ENCODE measurements at regions of chr11 and their contacts with region 1.

Region 1: GRCh38 chr11:128695539-128696221 is 1.8 kb downstream of the FLI1 start:
- DNase-seq: peak in 7 of 9 donors; percentile 39 to 63 (median 52)
- ATAC-seq: peak; percentile 75
- H3K4me3 ChIP-seq: peak overlapping the region; percentile 82
- H3K4me3 Mint-ChIP-seq: peak overlapping the region; percentile 89 to 99 (median 96)
- H3K27ac ChIP-seq: peak overlapping the region; percentile 86
- H3K27ac Mint-ChIP-seq: peak overlapping the region; percentile 72 to 96 (median 94)
- H3K4me1 ChIP-seq: peaks cover 45 to 53% of the 10 kb centered on the region in 2 donors
- H3K4me1 Mint-ChIP-seq: peaks cover 53 to 75% (median 67%) of the 10 kb centered on the region in 7 donors
- H3K27me3 ChIP-seq: no peaks in the 10 kb centered on the region
- H3K27me3 Mint-ChIP-seq: peaks cover 0 to 22% (median 0%) of the 10 kb centered on the region in 5 donors

Region 2: GRCh38 chr11:127726367-127726766 is 969.3 kb before region 1 on chr11:
- CTCF ChIA-PET with region 1: no interaction called
- POLR2A ChIA-PET with region 1: no interaction called
- intact Hi-C with region 1: no loop called
- DNase-seq: no peak
- ATAC-seq: no peak
- H3K4me3 ChIP-seq: no peak overlapping the region
- H3K4me3 Mint-ChIP-seq: no peak overlapping the region
- H3K27ac ChIP-seq: no peak overlapping the region
- H3K27ac Mint-ChIP-seq: no peak overlapping the region
- H3K4me1 ChIP-seq: no peaks in the 10 kb centered on the region
- H3K4me1 Mint-ChIP-seq: no peaks in the 10 kb centered on the region
- H3K27me3 ChIP-seq: no peaks in the 10 kb centered on the region
- H3K27me3 Mint-ChIP-seq: no peaks in the 10 kb centered on the region

Region 3: GRCh38 chr11:128512474-128512996 is 183.1 kb before region 1 on chr11:
- CTCF ChIA-PET with region 1: no interaction called
- POLR2A ChIA-PET with region 1: interaction called, 3 read pairs
- intact Hi-C with region 1: loop called (anchors 2 to 5 kb)
- DNase-seq: peak in 5 of 9 donors; percentile 26 to 56 (median 47)
- ATAC-seq: peak; percentile 40
- H3K4me3 ChIP-seq: peak overlapping the region; percentile 96
- H3K4me3 Mint-ChIP-seq: peak overlapping the region; percentile 94 to 100 (median 98)
- H3K27ac ChIP-seq: peak overlapping the region; percentile 97
- H3K27ac Mint-ChIP-seq: peak overlapping the region; percentile 92 to 99 (median 97)
- H3K4me1 ChIP-seq: peaks cover 54 to 59% of the 10 kb centered on the region in 2 donors
- H3K4me1 Mint-ChIP-seq: peaks cover 50 to 94% (median 77%) of the 10 kb centered on the region in 7 donors
- H3K27me3 ChIP-seq: no peaks in the 10 kb centered on the region
- H3K27me3 Mint-ChIP-seq: no peaks in the 10 kb centered on the region

Region 4: DNA sequence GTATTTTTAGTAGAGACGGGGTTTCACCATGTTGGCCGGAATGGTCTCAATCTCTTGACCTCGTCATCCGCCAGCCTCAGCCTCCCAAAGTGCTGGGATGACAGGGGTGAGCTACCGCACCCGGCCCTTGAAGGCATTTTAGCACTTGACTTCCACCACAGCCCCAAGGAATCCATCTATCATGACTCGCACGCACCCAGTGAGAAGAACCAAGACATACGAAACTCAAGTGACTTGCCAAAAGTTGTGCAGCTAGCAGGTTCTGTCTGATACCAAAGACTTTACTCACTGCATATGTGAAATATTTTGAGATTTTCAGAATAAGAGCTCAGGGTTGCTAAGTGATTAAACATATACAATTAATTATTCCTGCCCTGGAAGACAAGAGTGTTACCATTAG is 19.2 kb after region 1 on chr11:
- CTCF ChIA-PET with region 1: interaction called, 7 read pairs
- POLR2A ChIA-PET with region 1: interaction called, 22 read pairs
- intact Hi-C with region 1: loop called (anchors 1 kb)
- DNase-seq: no peak
- ATAC-seq: no peak
- H3K4me3 ChIP-seq: no peak overlapping the region
- H3K4me3 Mint-ChIP-seq: peak overlapping the region in 9 of 10 donors; percentile 2 to 92 (median 42)
- H3K27ac ChIP-seq: peak overlapping the region; percentile 73
- H3K27ac Mint-ChIP-seq: peak overlapping the region; percentile 61 to 99 (median 93)
- H3K4me1 ChIP-seq: peaks cover 77 to 90% of the 10 kb centered on the region in 2 donors
- H3K4me1 Mint-ChIP-seq: peaks cover 87 to 100% (median 98%) of the 10 kb centered on the region in 7 donors
- H3K27me3 ChIP-seq: no peaks in the 10 kb centered on the region
- H3K27me3 Mint-ChIP-seq: no peaks in the 10 kb centered on the region

Region 5: GRCh38 chr11:128725630-128726319 is 30.1 kb after region 1 on chr11:
- CTCF ChIA-PET with region 1: interaction called, 3 read pairs
- POLR2A ChIA-PET with region 1: interaction called, 56 read pairs
- intact Hi-C with region 1: loop called in 1 of 2 experiments (anchors 1 kb)
- DNase-seq: peak; percentile 32 to 90 (median 86)
- ATAC-seq: peak; percentile 76
- H3K4me3 ChIP-seq: peak overlapping the region; percentile 62
- H3K4me3 Mint-ChIP-seq: peak overlapping the region; percentile 70 to 96 (median 86)
- H3K27ac ChIP-seq: peak overlapping the region; percentile 65
- H3K27ac Mint-ChIP-seq: peak overlapping the region; percentile 71 to 98 (median 92)
- H3K4me1 ChIP-seq: peaks cover 96 to 99% of the 10 kb centered on the region in 2 donors
- H3K4me1 Mint-ChIP-seq: peaks cover 90 to 100% (median 97%) of the 10 kb centered on the region in 7 donors
- H3K27me3 ChIP-seq: no peaks in the 10 kb centered on the region
- H3K27me3 Mint-ChIP-seq: no peaks in the 10 kb centered on the region

Region 6: GRCh38 chr11:128757235-128757711 is 61.6 kb after region 1 on chr11:
- CTCF ChIA-PET with region 1: no interaction called
- POLR2A ChIA-PET with region 1: interaction called, 3 read pairs
- intact Hi-C with region 1: loop called (anchors 1 kb)
- DNase-seq: peak; percentile 27 to 74 (median 61)
- ATAC-seq: peak; percentile 96
- H3K4me3 ChIP-seq: no peak overlapping the region
- H3K4me3 Mint-ChIP-seq: peak overlapping the region in 8 of 10 donors; percentile 9 to 62 (median 40)
- H3K27ac ChIP-seq: no peak overlapping the region
- H3K27ac Mint-ChIP-seq: peak overlapping the region; percentile 43 to 92 (median 84)
- H3K4me1 ChIP-seq: peaks cover 36 to 49% of the 10 kb centered on the region in 2 donors
- H3K4me1 Mint-ChIP-seq: peaks cover 70 to 96% (median 89%) of the 10 kb centered on the region in 7 donors
- H3K27me3 ChIP-seq: no peaks in the 10 kb centered on the region
- H3K27me3 Mint-ChIP-seq: no peaks in the 10 kb centered on the region

Region 7: DNA sequence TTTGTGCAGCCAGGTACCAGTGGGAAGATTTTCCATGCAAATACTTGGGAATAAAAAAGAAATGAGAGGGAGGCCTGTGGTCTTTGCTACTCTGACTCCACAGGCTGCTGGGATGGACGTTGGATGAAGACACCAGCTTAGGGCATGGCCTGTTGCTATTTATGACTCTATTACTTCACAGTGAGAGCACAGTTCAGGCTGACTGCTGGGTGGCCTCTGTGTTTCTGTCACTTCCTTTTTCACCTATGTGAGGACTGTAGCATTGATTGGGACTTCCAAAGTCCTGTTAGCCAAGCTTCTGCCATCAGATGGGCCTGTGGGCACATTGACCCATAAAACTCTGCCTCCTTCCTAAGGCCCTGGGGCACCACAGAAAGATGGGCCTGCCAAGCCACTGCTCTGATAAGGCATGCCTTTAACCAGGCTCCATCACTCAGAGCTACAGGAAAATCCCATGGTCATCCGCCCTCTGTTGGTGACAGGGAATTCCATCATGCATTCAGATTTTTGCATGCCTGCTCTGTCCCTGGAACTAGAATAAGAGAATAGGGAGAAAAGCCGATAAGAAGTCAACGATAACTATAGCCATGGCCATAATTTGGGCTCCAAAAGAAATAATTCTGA is 106.8 kb after region 1 on chr11:
- CTCF ChIA-PET with region 1: no interaction called
- POLR2A ChIA-PET with region 1: no interaction called
- intact Hi-C with region 1: no loop called
- DNase-seq: no peak
- ATAC-seq: no peak
- H3K4me3 ChIP-seq: no peak overlapping the region
- H3K4me3 Mint-ChIP-seq: no peak overlapping the region
- H3K27ac ChIP-seq: no peak overlapping the region
- H3K27ac Mint-ChIP-seq: peak overlapping the region in 5 of 9 donors; percentile 7 to 68 (median 50)
- H3K4me1 ChIP-seq: no peaks in the 10 kb centered on the region
- H3K4me1 Mint-ChIP-seq: peaks cover 26 to 45% (median 33%) of the 10 kb centered on the region in 7 donors
- H3K27me3 ChIP-seq: no peaks in the 10 kb centered on the region
- H3K27me3 Mint-ChIP-seq: no peaks in the 10 kb centered on the region

Measured in naive thymus-derived CD4-positive, alpha-beta T cell (primary cell).